Gastrocnemius medialis (tissue), 4 donors: ENCODE measurements at regions of chr16 and their contacts with region 1.

Region 1: DNA sequence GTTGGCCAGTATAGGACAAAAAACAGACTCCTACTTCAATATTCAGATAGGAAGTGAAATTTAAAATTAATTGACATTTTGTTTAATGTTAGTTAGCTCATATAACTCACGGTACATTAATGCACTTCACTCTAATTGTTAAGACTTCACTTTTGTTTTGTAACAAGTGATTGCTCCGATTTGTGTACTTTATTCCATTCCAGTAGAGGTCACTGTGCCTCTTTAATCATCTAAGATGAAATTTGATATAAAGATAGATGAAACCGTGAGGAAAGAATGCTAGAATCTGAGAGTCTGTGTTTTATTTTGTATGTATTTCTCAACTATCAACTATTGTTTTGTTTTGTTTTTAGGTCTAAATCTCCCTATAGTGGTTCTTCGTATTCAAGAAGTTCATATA is 29.0 kb downstream of the RBBP6 start:
- DNase-seq: no peak
- ATAC-seq: no peak
- H3K4me3 ChIP-seq: no peak overlapping the region
- H3K27ac ChIP-seq: no peak overlapping the region
- H3K4me1 ChIP-seq: no peaks in the 10 kb centered on the region
- H3K27me3 ChIP-seq: no peaks in the 10 kb centered on the region
- CTCF ChIP-seq: peak in 2 of 5 experiments; percentile 18 to 27
- POLR2A ChIP-seq: no peak

Region 2: GRCh38 chr16:24645739-24646645 is 77.6 kb after region 1 on chr16:
- in situ Hi-C with region 1: no loop called
- intact Hi-C with region 1: no loop called
- DNase-seq: no peak
- ATAC-seq: peak; percentile 70 to 71
- H3K4me3 ChIP-seq: no peak overlapping the region
- H3K27ac ChIP-seq: peak overlapping the region in 1 of 4 donors; percentile 46
- H3K4me1 ChIP-seq: no peaks in the 10 kb centered on the region
- H3K27me3 ChIP-seq: no peaks in the 10 kb centered on the region
- CTCF ChIP-seq: no peak
- POLR2A ChIP-seq: no peak

Region 3: DNA sequence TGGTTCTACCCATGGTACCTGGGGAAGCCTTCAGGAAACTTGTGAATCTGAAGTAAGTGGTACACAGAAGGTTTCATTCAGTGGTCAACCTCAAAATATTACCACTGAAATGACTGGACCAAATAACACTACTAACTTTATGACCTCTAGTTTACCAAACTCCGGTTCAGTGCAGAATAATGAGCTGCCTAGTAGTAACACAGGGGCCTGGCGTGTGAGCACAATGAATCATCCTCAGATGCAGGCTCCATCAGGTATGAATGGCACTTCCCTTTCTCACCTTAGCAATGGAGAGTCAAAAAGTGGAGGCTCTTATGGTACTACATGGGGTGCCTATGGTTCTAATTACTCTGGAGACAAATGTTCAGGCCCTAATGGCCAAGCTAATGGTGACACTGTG is 221.5 kb after region 1 on chr16:
- in situ Hi-C with region 1: loop called in 1 of 4 experiments (anchors 10 kb)
- intact Hi-C with region 1: no loop called
- DNase-seq: no peak
- ATAC-seq: no peak
- H3K4me3 ChIP-seq: no peak overlapping the region
- H3K27ac ChIP-seq: no peak overlapping the region
- H3K4me1 ChIP-seq: peaks cover 0 to 6% of the 10 kb centered on the region in 2 donors
- H3K27me3 ChIP-seq: no peaks in the 10 kb centered on the region
- CTCF ChIP-seq: no peak
- POLR2A ChIP-seq: no peak

Region 4: GRCh38 chr16:24800586-24800985 is 232.2 kb after region 1 on chr16:
- in situ Hi-C with region 1: loop called (anchors 10 to 25 kb)
- intact Hi-C with region 1: loop called (anchors 5 kb)
- DNase-seq: no peak
- ATAC-seq: peak in 1 of 2 donors; percentile 48
- H3K4me3 ChIP-seq: no peak overlapping the region
- H3K27ac ChIP-seq: peak overlapping the region in 1 of 4 donors; percentile 6
- H3K4me1 ChIP-seq: no peaks in the 10 kb centered on the region
- H3K27me3 ChIP-seq: no peaks in the 10 kb centered on the region
- CTCF ChIP-seq: no peak
- POLR2A ChIP-seq: no peak

Region 5: DNA sequence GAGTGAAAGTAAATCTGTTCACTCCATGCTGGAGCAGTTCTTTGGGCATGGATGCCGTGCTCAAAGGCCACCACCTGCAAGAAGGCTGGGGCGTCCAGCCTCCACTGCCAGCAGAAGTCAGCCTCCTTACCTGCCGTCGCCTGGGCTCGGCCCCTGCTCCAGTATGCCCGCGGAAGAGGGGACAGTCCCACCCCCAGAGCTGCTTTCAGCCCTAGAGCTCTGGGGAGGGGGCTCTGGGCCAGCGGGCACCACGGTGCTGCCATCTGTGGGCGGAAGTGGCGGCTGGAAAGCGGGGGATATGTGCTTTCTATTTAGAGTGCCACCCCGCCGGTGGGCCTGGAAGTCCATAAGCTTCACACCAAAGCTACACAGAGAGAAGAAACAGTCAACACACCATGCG is 370.8 kb after region 1 on chr16:
- in situ Hi-C with region 1: loop called in 1 of 4 experiments (anchors 25 kb)
- intact Hi-C with region 1: no loop called
- DNase-seq: no peak
- ATAC-seq: no peak
- H3K4me3 ChIP-seq: no peak overlapping the region
- H3K27ac ChIP-seq: no peak overlapping the region
- H3K4me1 ChIP-seq: no peaks in the 10 kb centered on the region
- H3K27me3 ChIP-seq: no peaks in the 10 kb centered on the region
- CTCF ChIP-seq: no peak
- POLR2A ChIP-seq: no peak

Region 6: GRCh38 chr16:24950275-24950674 is 381.9 kb after region 1 on chr16:
- in situ Hi-C with region 1: loop called in 2 of 4 experiments (anchors 25 kb)
- intact Hi-C with region 1: no loop called
- DNase-seq: no peak
- ATAC-seq: no peak
- H3K4me3 ChIP-seq: no peak overlapping the region
- H3K27ac ChIP-seq: no peak overlapping the region
- H3K4me1 ChIP-seq: no peaks in the 10 kb centered on the region
- H3K27me3 ChIP-seq: no peaks in the 10 kb centered on the region
- CTCF ChIP-seq: no peak
- POLR2A ChIP-seq: no peak